ENCODE measurements at regions of chr2 and their contacts with region 1.

Region 1: DNA sequence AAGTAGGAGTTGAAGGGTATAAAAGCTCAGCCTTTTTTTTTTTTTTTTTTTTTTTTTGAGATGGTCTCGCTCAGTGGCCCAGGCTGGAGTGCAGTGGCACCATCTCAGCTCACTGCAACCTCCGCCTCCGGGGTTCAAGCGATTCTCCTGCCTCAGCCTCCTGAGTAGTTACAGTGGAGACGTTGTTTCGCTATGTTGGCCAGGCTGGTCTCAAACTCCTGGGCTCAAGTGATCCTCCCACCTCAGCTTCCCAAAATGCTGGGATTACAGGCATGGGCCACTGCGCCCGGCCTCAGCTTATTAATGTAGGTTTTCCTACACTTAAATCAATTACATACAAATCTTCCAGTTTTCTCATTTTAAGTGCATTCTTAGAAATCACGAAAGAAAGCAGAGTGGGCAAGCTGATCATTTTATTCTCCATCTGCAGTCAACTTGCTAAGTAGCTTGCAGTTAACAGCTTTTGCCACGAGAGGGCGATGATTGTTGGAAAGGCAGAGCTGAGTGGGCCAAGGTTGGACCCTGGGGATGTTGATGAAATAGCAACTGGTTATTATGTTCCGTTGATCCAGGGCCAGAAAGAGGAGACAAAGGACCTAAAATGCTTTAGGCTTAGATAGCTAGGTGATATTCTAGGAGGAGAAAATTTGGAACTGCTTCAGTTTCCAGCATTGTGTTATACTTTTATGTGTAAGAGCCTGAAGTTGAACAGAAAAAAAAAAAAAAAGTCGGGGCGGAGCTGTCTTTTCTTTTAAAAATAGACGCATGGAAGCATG is 234.4 kb upstream of the EPAS1 start:
- DNase-seq: peak; percentile 90
- ATAC-seq: peak; percentile 84
- H3K4me3 Mint-ChIP-seq: no peak overlapping the region
- H3K27ac Mint-ChIP-seq: peak overlapping the region; percentile 46; the same call in 1 of the 2 replicates
- H3K4me1 Mint-ChIP-seq: peaks cover 12% of the 10 kb centered on the region
- H3K27me3 Mint-ChIP-seq: no peaks in the 10 kb centered on the region
- CTCF ChIP-seq: peak; percentile 75

Region 2: GRCh38 chr2:45851613-45852304 is 211.1 kb before region 1 on chr2:
- CTCF ChIA-PET with region 1: no interaction called
- POLR2A ChIA-PET with region 1: no interaction called
- DNase-seq: no peak
- ATAC-seq: no peak
- H3K4me3 Mint-ChIP-seq: no peak overlapping the region
- H3K27ac Mint-ChIP-seq: no peak overlapping the region
- H3K4me1 Mint-ChIP-seq: peaks cover 13% of the 10 kb centered on the region
- H3K27me3 Mint-ChIP-seq: no peaks in the 10 kb centered on the region; the same call in 1 of the 2 replicates
- CTCF ChIP-seq: no peak

Region 3: GRCh38 chr2:45951025-45951727 is 111.6 kb before region 1 on chr2:
- CTCF ChIA-PET with region 1: no interaction called
- POLR2A ChIA-PET with region 1: no interaction called
- DNase-seq: no peak
- ATAC-seq: no peak
- H3K4me3 Mint-ChIP-seq: no peak overlapping the region
- H3K27ac Mint-ChIP-seq: no peak overlapping the region
- H3K4me1 Mint-ChIP-seq: peaks cover 9% of the 10 kb centered on the region
- H3K27me3 Mint-ChIP-seq: no peaks in the 10 kb centered on the region
- CTCF ChIP-seq: no peak

Region 4: DNA sequence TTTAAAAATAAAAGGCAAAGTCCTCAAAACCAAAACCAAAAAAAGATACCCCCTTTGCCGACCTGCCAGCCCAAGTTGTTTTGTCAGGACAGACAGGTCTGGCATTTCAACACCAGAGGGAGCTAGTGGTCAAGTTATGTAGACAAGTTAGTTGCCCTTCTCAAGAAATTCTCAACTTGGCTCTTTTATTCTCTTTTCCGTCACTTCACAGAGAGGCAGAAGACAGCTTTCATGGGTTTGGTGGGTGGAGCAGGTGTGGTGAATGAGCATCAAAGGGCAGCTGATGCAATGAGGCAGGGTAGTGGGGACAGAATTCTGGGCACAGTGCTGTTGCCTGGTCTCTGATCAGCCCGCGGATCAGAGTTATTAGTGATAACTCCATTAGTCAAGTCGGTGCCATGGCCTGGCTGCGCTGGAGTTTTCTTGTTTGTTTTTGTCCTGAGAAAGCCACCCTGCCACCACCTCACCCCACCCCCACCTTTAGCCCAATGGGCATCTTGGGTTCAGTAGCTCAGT is 69.3 kb before region 1 on chr2:
- CTCF ChIA-PET with region 1: interaction called, 41 read pairs
- POLR2A ChIA-PET with region 1: interaction called, 3 read pairs
- DNase-seq: peak; percentile 74
- ATAC-seq: peak; percentile 86
- H3K4me3 Mint-ChIP-seq: no peak overlapping the region
- H3K27ac Mint-ChIP-seq: no peak overlapping the region
- H3K4me1 Mint-ChIP-seq: peaks cover 15% of the 10 kb centered on the region
- H3K27me3 Mint-ChIP-seq: no peaks in the 10 kb centered on the region
- CTCF ChIP-seq: peak; percentile 55

Region 5: GRCh38 chr2:46029332-46029811 is 33.5 kb before region 1 on chr2:
- CTCF ChIA-PET with region 1: interaction called, 20 read pairs
- POLR2A ChIA-PET with region 1: no interaction called
- DNase-seq: no peak
- ATAC-seq: peak; percentile 57; the same call in 1 of the 2 replicates
- H3K4me3 Mint-ChIP-seq: no peak overlapping the region
- H3K27ac Mint-ChIP-seq: no peak overlapping the region
- H3K4me1 Mint-ChIP-seq: peaks cover 25% of the 10 kb centered on the region
- H3K27me3 Mint-ChIP-seq: no peaks in the 10 kb centered on the region
- CTCF ChIP-seq: no peak

Region 6: GRCh38 chr2:46184859-46185581 is 122.2 kb after region 1 on chr2:
- CTCF ChIA-PET with region 1: interaction called, 16 read pairs
- POLR2A ChIA-PET with region 1: no interaction called
- DNase-seq: peak; percentile 52
- ATAC-seq: peak; percentile 94
- H3K4me3 Mint-ChIP-seq: no peak overlapping the region
- H3K27ac Mint-ChIP-seq: no peak overlapping the region; the same call in 1 of the 2 replicates
- H3K4me1 Mint-ChIP-seq: no peaks in the 10 kb centered on the region
- H3K27me3 Mint-ChIP-seq: no peaks in the 10 kb centered on the region
- CTCF ChIP-seq: peak; percentile 36; the same call in 1 of the 2 replicates

Region 7: DNA sequence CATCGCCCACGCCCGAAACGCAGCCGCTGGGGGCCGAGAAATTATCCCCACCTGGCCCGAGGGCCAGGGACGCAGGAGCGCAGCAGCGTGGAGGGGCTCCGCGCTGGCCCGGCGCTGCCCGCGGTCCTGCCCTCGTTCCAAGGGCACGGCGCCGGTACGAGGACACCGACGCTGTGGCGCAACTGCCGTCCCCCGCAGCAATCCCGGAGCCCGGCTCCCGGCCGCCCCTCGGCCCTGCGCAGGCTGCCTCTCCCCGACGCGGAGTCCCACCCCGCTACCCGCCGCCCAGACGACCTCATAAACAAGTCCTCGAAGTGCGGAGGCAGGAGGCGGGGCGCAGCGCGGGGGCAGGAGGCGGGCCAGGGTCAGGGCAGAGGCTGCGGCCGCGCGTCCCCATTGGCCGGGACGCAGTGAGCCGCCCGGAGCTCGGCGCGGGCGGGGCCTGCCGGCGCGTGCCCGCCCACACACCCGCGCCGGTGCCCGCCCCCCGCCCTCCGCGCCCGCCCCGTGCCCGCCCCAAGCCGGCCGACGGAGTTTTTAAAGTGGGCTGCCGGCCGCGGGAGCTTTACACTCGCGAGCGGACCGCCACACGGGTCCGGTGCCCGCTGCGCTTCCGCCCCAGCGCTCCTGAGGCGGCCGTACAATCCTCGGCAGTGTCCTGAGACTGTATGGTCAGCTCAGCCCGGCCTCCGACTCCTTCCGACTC is 234.2 kb after region 1 on chr2 and contains the start of gene EPAS1:
- CTCF ChIA-PET with region 1: interaction called, 29 read pairs
- POLR2A ChIA-PET with region 1: interaction called, 4 read pairs
- DNase-seq: peak; percentile 92
- ATAC-seq: peak; percentile 84
- H3K4me3 Mint-ChIP-seq: peak within 1 kb of the TSS; percentile 83
- H3K27ac Mint-ChIP-seq: no peak within 1 kb of the TSS
- H3K4me1 Mint-ChIP-seq: peaks cover 38% of the 10 kb centered on the region
- H3K27me3 Mint-ChIP-seq: peaks cover 78% of the 10 kb centered on the region
- CTCF ChIP-seq: no peak
- total RNA-seq, gene EPAS1: 4.5 to 8.5 TPM (median 4.7 TPM) in 3 replicates

Measured in WTC11 (cell line).